Left colon (tissue), 2 donors: ENCODE measurements at regions of chr11 and their contacts with region 1.

Region 1: GRCh38 chr11:14300661-14301304 is 58.2 kb downstream of the RRAS2 start:
- DNase-seq: peak; percentile 32 to 38
- ATAC-seq: peak; percentile 95

Region 2: DNA sequence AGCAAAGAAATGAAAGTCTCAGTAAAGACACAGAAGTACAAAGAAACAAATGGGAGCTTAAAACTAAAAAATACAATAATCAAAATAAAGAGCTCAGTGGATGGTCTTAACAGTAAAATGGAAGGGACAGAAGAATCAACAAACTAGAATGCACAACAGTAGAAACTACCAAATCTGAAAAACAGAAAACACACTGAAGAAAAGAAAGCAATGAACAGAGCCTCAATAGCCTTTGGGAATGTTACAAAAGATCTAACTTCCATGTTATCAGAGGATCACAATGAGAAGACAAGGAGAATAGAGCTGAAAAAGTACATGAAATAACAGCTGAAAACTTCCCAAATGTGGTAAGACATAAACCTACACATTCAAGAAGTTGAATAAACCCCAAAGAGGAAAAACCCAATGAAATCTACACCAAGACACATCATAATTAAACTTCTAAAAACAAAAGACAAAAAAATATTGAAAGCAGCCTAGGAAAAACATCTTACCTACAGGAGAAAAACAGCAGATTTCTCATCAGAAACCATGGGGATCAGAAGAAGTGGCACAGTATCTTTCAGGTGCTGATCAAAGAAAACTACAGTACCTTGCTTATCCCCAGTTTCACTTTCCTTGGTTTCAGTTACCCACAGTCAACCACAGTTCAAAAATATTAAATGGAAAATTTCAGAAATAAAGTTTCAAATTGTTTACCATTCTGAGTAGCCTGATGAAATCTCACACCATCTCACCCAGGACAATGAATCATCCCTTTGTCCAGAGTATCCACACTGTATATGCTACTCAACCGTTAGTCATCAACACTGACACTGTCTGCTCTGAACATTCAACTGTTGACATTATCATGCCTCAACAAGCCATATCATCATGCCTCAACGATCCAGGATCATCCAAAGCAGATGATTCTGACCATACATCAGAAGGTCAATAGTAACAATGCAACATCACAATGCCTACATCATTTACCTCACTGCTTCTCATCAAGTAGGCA is 36.0 kb after region 1 on chr11:
- intact Hi-C with region 1: no loop called
- DNase-seq: no peak
- ATAC-seq: peak; percentile 44

Region 3: GRCh38 chr11:14454861-14455632 is 154.3 kb after region 1 on chr11:
- intact Hi-C with region 1: loop called in 1 of 2 experiments (anchors 5 kb)
- DNase-seq: no peak
- ATAC-seq: peak; percentile 51